Activated B cell treated with CpG ODN at 0.5 μM for 24 hours (primary cell): ENCODE measurements at regions of chr1 and their contacts with region 1.

Region 1: GRCh38 chr1:31910933-31911332 is 27.2 kb downstream of the PTP4A2 start:
- DNase-seq: no peak
- ATAC-seq: peak; percentile 63
- H3K4me3 Mint-ChIP-seq: no peak overlapping the region
- H3K27ac Mint-ChIP-seq: peak overlapping the region; percentile 20
- H3K4me1 Mint-ChIP-seq: peaks cover 38% of the 10 kb centered on the region
- H3K27me3 Mint-ChIP-seq: no peaks in the 10 kb centered on the region
- CTCF ChIP-seq: no peak

Region 2: DNA sequence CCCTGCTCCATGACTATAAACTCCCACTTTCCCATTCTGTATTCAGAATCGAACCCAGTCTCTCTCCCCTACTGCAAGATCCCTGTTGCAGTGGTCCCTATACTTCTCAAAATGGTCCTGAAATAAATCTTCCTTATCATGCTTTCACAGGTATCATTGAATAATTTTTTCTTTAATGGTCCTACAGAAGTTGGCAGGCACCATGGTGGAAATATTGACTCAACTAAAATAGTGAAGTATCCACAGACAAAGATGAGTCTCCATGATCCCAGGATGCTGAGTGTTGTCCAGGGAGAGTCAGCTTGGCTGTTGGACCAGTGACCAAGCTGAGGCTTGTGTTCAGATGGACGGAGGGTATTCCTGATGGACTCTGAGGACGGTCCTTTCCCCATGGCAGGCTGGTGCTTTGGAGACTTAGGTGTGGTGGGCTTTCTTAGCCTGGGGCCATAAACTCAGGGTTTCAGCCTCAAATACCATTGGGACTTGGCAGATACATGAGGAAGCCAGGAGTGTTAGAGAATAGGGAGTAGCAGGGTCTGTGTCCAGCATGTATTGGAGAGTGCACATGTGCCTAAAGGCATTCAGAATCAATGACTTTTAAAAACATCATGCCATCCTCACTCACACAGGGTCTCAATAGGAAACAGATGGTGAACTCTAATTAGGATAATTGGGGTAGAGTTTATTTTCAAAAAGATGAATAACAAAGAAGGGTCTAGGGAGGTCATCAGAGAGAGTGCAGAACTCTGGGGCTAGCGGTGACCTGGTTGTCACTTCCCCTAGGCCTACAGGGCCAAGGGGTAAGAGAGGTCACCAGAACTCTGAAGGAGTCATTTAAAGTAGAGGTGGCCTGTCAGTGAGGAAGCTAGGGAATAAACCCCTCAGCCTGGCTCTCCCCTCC is 314.8 kb before region 1 on chr1:
- CTCF ChIA-PET with region 1: no interaction called
- POLR2A ChIA-PET with region 1: no interaction called
- intact Hi-C with region 1: no loop called
- DNase-seq: no peak
- ATAC-seq: no peak
- H3K4me3 Mint-ChIP-seq: no peak overlapping the region
- H3K27ac Mint-ChIP-seq: peak overlapping the region; percentile 13
- H3K4me1 Mint-ChIP-seq: peaks cover 18% of the 10 kb centered on the region
- H3K27me3 Mint-ChIP-seq: peaks cover 11% of the 10 kb centered on the region
- CTCF ChIP-seq: no peak

Region 3: GRCh38 chr1:31880890-31881687 is 29.8 kb before region 1 on chr1:
- CTCF ChIA-PET with region 1: interaction called, 3 read pairs
- POLR2A ChIA-PET with region 1: no interaction called
- intact Hi-C with region 1: loop called (anchors 5 kb)
- DNase-seq: no peak
- ATAC-seq: peak; percentile 74
- H3K4me3 Mint-ChIP-seq: peak overlapping the region; percentile 62
- H3K27ac Mint-ChIP-seq: peak overlapping the region; percentile 51
- H3K4me1 Mint-ChIP-seq: peaks cover 55% of the 10 kb centered on the region
- H3K27me3 Mint-ChIP-seq: no peaks in the 10 kb centered on the region
- CTCF ChIP-seq: no peak

Region 4: DNA sequence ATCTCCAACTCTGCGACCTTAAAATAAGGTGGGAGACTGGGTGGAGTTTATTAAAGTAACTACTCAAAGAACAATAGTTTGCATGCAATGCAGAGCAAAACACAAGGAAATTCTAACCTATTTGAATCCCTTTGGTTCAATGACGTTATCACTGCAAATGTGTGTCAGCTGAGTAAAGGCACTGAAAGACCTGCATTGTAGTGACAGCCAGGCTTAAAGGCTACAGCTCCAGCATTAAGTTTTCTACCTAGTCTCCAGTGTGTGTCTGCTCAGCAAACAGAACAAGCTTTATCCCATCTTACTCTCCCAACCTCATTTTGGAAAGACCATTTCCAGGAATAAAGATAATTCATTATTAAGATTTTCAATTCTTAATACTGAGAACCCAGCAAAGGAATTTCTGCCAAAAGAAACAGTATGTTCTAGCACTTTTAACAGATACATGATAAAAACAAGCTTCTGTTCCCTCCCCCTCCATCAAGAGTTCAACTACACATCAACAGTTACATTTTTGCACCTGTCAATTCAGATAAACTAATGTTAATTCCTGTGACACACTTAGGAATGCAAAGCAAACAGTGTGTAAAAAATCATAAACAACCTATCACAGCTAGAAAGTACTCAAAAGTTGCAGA is 13.1 kb after region 1 on chr1:
- CTCF ChIA-PET with region 1: no interaction called
- POLR2A ChIA-PET with region 1: interaction called, 14 read pairs
- intact Hi-C with region 1: loop called (anchors 2 kb)
- DNase-seq: no peak
- ATAC-seq: no peak
- H3K4me3 Mint-ChIP-seq: no peak overlapping the region
- H3K27ac Mint-ChIP-seq: peak overlapping the region; percentile 30
- H3K4me1 Mint-ChIP-seq: peaks cover 82% of the 10 kb centered on the region
- H3K27me3 Mint-ChIP-seq: no peaks in the 10 kb centered on the region
- CTCF ChIP-seq: no peak

Region 5: GRCh38 chr1:31955917-31956736 is 45.2 kb after region 1 on chr1:
- CTCF ChIA-PET with region 1: interaction called, 9 read pairs
- POLR2A ChIA-PET with region 1: interaction called, 4 read pairs
- intact Hi-C with region 1: loop called (anchors 2 kb)
- DNase-seq: peak; percentile 56
- ATAC-seq: peak; percentile 97
- H3K4me3 Mint-ChIP-seq: peak overlapping the region; percentile 72
- H3K27ac Mint-ChIP-seq: peak overlapping the region; percentile 93
- H3K4me1 Mint-ChIP-seq: peaks cover 41% of the 10 kb centered on the region
- H3K27me3 Mint-ChIP-seq: no peaks in the 10 kb centered on the region
- CTCF ChIP-seq: no peak

Region 6: DNA sequence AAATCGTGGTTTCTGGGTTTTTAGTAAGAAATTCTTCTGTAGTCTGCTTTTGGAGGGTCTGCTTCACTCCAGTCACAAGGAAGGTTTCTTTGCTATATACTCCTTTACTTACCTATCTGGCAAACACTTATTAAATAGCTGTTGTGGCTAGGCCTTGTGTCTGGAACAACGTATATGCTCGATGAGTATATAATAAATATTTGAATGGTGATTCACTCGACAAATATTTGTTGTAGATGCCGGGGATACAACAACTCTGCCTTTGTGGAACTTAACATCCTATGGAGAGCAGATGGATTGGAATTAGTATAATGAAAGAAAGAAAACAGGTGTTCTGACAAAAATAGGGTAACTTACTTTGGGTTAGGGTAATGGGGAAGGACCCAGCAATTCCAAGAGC is 228.0 kb after region 1 on chr1:
- CTCF ChIA-PET with region 1: no interaction called
- POLR2A ChIA-PET with region 1: no interaction called
- intact Hi-C with region 1: no loop called
- DNase-seq: no peak
- ATAC-seq: no peak
- H3K4me3 Mint-ChIP-seq: no peak overlapping the region
- H3K27ac Mint-ChIP-seq: no peak overlapping the region
- H3K4me1 Mint-ChIP-seq: peaks cover 37% of the 10 kb centered on the region
- H3K27me3 Mint-ChIP-seq: no peaks in the 10 kb centered on the region
- CTCF ChIP-seq: no peak